ENCODE measurements at regions of chr18 and their contacts with region 1.

Region 1: GRCh38 chr18:5237723-5238370 is 40.8 kb upstream of the AKAIN1 start:
- DNase-seq: peak; percentile 93
- ATAC-seq: peak; percentile 99

Region 2: DNA sequence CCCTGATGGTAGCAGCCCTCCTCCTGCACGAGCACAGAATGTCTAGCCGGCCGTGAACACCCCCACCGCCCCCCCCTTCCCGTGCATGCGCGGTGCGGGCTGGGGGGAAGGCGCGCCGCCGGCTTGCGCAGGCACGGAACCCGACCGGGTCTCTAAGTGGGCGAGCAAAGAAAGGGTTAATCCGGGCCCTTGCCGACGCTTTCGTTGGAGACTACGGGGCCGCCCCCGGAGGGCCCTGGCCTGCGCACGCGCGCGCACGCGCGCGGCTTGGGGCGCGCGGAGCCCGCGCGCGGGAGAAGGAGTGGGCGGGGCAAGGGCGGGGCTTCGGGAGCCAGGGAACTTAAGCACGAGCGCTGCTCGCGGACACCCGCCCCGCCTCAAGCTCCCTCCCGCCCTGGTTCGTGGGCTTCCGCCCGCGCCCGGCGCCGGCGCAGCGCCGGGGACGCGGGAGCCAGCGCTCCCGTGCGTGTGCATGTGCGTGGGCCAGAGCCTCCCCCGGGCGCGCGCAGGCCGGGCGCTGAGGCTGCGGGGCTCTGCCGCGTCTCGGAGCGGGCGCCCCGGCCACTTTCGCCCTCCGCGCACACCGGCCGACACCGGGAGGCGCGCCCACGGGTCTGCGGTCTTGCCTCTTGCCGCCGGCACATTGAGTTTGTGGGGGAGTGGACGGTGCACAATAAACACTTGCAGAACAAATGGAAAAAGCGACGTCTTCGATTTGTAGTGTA is 58.3 kb after region 1 on chr18:
- intact Hi-C with region 1: loop called (anchors 5 kb)
- DNase-seq: peak; percentile 98
- ATAC-seq: peak; percentile 93